Breast epithelium (tissue), 4 donors: ENCODE measurements at regions of chr13 and their contacts with region 1.

Region 1: DNA sequence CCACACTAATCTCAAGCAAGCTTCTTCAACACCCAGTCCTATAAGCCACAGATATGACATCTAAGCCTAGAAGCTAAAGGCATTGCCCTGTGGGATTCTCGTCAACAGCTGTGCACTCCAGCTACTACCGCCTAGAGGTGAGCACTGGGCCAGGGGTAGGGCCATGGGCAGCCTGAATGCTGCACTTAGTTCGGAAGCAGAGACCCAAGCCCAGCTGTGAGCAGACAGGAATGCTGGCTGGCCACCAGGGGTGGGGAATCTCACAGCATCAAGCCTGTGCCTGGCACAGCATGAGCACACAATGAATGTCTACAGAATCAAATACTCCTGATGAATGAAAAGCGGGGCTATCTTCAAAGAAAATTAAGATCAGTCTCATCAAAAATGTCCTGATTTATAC is 167.5 kb upstream of the UBL3 start:
- DNase-seq: no peak
- H3K4me3 ChIP-seq: no peak overlapping the region
- H3K27ac ChIP-seq: no peak overlapping the region
- H3K4me1 ChIP-seq: no peaks in the 10 kb centered on the region
- H3K27me3 ChIP-seq: no peaks in the 10 kb centered on the region
- CTCF ChIP-seq: no peak
- POLR2A ChIP-seq: no peak

Region 2: GRCh38 chr13:29020314-29020713 is 997.6 kb before region 1 on chr13:
- intact Hi-C with region 1: loop called (anchors 5 kb)
- DNase-seq: no peak
- H3K4me3 ChIP-seq: no peak overlapping the region
- H3K27ac ChIP-seq: no peak overlapping the region
- H3K4me1 ChIP-seq: no peaks in the 10 kb centered on the region
- H3K27me3 ChIP-seq: no peaks in the 10 kb centered on the region
- CTCF ChIP-seq: no peak
- POLR2A ChIP-seq: no peak

Region 3: GRCh38 chr13:29402166-29402636 is 615.7 kb before region 1 on chr13:
- intact Hi-C with region 1: loop called (anchors 10 kb)
- DNase-seq: no peak
- H3K4me3 ChIP-seq: no peak overlapping the region
- H3K27ac ChIP-seq: no peak overlapping the region
- H3K4me1 ChIP-seq: no peaks in the 10 kb centered on the region
- H3K27me3 ChIP-seq: no peaks in the 10 kb centered on the region
- CTCF ChIP-seq: no peak
- POLR2A ChIP-seq: no peak

Region 4: DNA sequence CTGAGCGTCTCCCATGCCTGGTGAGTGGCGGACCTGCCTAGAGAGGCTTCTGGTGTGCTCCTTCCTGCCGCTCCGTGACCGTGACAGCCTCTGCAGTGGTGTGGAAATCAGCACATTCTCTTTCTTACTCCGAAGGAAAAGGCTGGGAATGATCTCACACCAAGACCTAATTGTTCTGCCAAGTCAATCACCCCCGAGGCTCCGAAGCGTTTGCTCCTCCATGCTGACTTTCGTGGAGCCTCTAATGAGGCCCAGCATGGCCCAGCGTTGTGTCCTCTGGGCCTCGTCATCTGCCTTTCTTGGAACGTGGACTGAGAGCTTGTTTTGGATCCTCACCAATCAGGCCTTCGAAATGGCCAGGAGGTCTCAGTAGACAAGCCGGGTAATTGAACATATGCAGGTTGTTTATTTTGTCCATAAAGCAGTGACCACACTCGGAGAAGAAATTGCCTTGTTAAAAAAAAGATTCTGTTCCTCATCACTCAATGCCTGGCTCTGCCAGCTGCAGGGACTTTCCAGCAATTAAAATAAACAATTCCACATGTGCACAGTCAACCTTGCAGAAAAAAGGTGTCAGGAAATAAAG is 274.6 kb before region 1 on chr13:
- intact Hi-C with region 1: no loop called
- DNase-seq: peak; percentile 51 to 52
- H3K4me3 ChIP-seq: no peak overlapping the region
- H3K27ac ChIP-seq: peak overlapping the region; percentile 53 to 59
- H3K4me1 ChIP-seq: no peaks in the 10 kb centered on the region
- H3K27me3 ChIP-seq: no peaks in the 10 kb centered on the region
- CTCF ChIP-seq: no peak
- POLR2A ChIP-seq: no peak

Region 5: GRCh38 chr13:30045916-30046704 is 28.2 kb after region 1 on chr13:
- intact Hi-C with region 1: no loop called
- DNase-seq: no peak
- H3K4me3 ChIP-seq: no peak overlapping the region
- H3K27ac ChIP-seq: no peak overlapping the region
- H3K4me1 ChIP-seq: no peaks in the 10 kb centered on the region
- H3K27me3 ChIP-seq: no peaks in the 10 kb centered on the region
- CTCF ChIP-seq: no peak
- POLR2A ChIP-seq: no peak